Naive thymus-derived CD4-positive, alpha-beta T cell (primary cell): ENCODE measurements at regions of chr2 and their contacts with region 1.

Region 1: DNA sequence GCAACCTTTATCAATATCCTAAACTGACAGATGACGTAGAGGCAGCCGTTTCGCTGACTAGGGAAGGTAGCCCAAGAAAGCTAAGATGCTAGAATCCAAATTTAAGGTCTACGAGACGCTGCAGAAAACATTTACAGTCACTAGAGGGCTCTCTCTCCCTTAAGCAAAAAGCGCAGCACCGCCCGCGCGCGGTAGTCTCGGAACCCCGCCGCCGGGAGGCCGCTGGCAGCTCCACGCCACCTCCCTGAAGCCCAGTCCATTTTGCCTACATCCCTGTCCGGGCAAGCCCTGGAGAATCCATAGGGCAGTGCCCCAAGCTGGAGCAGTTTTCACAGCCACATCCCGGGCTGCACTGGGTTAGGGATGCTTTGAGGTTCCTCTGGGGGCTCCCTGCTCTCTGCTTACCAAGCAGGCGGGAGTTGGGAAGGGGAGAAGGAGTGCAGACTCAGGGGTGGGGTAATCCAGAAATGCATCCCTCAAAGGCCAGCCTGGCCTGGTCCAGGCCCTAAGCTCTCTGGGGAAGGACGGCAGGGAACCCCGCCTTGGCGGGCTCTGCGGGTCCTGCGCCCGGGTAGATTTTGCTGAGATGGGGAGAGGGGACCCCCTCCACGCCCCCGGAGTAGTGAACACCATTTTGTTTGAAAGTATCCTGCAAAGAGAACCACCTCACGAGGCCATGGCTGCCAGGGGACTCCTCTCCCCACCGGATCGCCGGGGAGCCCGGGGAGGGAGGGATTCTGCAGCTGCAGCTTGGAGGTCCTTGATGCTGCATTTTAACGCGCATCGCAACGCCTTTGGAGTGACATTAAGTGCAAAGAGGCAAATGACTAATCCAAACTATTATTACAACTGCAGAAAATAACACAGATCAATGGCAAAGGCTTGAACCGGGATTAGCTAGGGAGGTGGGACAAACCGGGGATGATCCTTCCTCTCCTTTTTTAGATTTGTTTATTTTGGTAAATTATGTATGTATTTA is 1.3 kb upstream of the DPYSL5 start:
- DNase-seq: peak; percentile 38 to 67 (median 59)
- ATAC-seq: peak; percentile 84
- H3K4me3 ChIP-seq: no peak overlapping the region
- H3K4me3 Mint-ChIP-seq: peak overlapping the region; percentile 61 to 88 (median 78)
- H3K27ac ChIP-seq: no peak overlapping the region
- H3K27ac Mint-ChIP-seq: no peak overlapping the region
- H3K4me1 ChIP-seq: peaks cover 8 to 20% of the 10 kb centered on the region in 2 donors
- H3K4me1 Mint-ChIP-seq: peaks cover 3 to 20% (median 13%) of the 10 kb centered on the region in 7 donors
- H3K27me3 ChIP-seq: peaks cover 6 to 17% of the 10 kb centered on the region in 2 donors
- H3K27me3 Mint-ChIP-seq: peaks cover 44 to 58% (median 46%) of the 10 kb centered on the region in 5 donors

Region 2: DNA sequence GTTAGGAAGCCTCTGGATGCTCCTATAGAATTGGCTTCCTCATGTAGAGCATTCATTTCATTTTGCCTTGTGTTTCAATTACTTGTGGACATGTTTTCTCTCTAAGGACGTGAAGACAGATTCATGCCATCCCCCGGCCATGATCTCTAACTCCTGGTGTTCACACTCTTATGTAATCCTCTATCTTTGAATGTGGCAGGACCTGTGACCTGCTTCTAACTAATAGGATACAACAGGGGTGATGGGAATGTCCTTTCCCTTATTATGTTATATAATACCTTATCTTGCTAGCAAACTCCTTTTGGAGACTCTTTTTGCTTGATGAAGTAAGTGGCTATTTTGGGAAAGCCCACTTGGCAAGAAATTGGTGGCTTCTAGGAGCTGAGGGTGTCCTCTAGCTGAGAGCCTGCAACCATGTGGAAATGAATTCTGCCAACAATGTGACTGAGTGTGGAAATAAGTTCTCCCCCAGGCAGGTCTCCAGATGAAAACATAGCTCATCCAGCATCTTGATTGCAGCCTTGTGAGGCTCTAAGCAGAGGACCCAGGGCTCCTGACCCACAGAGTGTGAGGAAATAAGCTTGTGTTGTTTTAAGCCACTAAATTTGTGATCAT is 15.1 kb after region 1 on chr2:
- CTCF ChIA-PET with region 1: interaction called, 9 read pairs
- POLR2A ChIA-PET with region 1: interaction called, 10 read pairs
- intact Hi-C with region 1: no loop called
- DNase-seq: no peak
- ATAC-seq: no peak
- H3K4me3 ChIP-seq: no peak overlapping the region
- H3K4me3 Mint-ChIP-seq: no peak overlapping the region
- H3K27ac ChIP-seq: no peak overlapping the region
- H3K27ac Mint-ChIP-seq: no peak overlapping the region
- H3K4me1 ChIP-seq: no peaks in the 10 kb centered on the region
- H3K4me1 Mint-ChIP-seq: no peaks in the 10 kb centered on the region
- H3K27me3 ChIP-seq: no peaks in the 10 kb centered on the region
- H3K27me3 Mint-ChIP-seq: peaks cover 10 to 44% (median 19%) of the 10 kb centered on the region in 5 donors

Region 3: GRCh38 chr2:26922405-26923188 is 76.0 kb after region 1 on chr2:
- CTCF ChIA-PET with region 1: interaction called, 6 read pairs
- POLR2A ChIA-PET with region 1: no interaction called
- intact Hi-C with region 1: loop called (anchors 1 to 5 kb)
- DNase-seq: peak in 7 of 9 donors; percentile 4 to 48 (median 39)
- ATAC-seq: peak; percentile 85
- H3K4me3 ChIP-seq: no peak overlapping the region
- H3K4me3 Mint-ChIP-seq: peak overlapping the region in 1 of 10 donors; percentile 24
- H3K27ac ChIP-seq: no peak overlapping the region
- H3K27ac Mint-ChIP-seq: peak overlapping the region in 1 of 9 donors; percentile 15
- H3K4me1 ChIP-seq: no peaks in the 10 kb centered on the region
- H3K4me1 Mint-ChIP-seq: peaks cover 0 to 9% (median 3%) of the 10 kb centered on the region in 7 donors
- H3K27me3 ChIP-seq: no peaks in the 10 kb centered on the region
- H3K27me3 Mint-ChIP-seq: peaks cover 0 to 27% (median 20%) of the 10 kb centered on the region in 5 donors

Region 4: GRCh38 chr2:26942543-26943295 is 96.1 kb after region 1 on chr2:
- CTCF ChIA-PET with region 1: interaction called, 16 read pairs
- POLR2A ChIA-PET with region 1: no interaction called
- intact Hi-C with region 1: loop called (anchors 1 kb)
- DNase-seq: peak; percentile 38 to 68 (median 61)
- ATAC-seq: peak; percentile 74
- H3K4me3 ChIP-seq: no peak overlapping the region
- H3K4me3 Mint-ChIP-seq: no peak overlapping the region
- H3K27ac ChIP-seq: no peak overlapping the region
- H3K27ac Mint-ChIP-seq: no peak overlapping the region
- H3K4me1 ChIP-seq: no peaks in the 10 kb centered on the region
- H3K4me1 Mint-ChIP-seq: peaks cover 0 to 7% (median 4%) of the 10 kb centered on the region in 7 donors
- H3K27me3 ChIP-seq: no peaks in the 10 kb centered on the region
- H3K27me3 Mint-ChIP-seq: peaks cover 3 to 19% (median 8%) of the 10 kb centered on the region in 5 donors

Region 5: GRCh38 chr2:27016801-27017325 is 170.2 kb after region 1 on chr2:
- CTCF ChIA-PET with region 1: interaction called, 3 read pairs
- POLR2A ChIA-PET with region 1: no interaction called
- intact Hi-C with region 1: loop called (anchors 2 kb)
- DNase-seq: peak in 7 of 9 donors; percentile 20 to 38 (median 27)
- ATAC-seq: peak; percentile 54
- H3K4me3 ChIP-seq: no peak overlapping the region
- H3K4me3 Mint-ChIP-seq: no peak overlapping the region
- H3K27ac ChIP-seq: no peak overlapping the region
- H3K27ac Mint-ChIP-seq: no peak overlapping the region
- H3K4me1 ChIP-seq: no peaks in the 10 kb centered on the region
- H3K4me1 Mint-ChIP-seq: peaks cover 0 to 7% (median 0%) of the 10 kb centered on the region in 7 donors
- H3K27me3 ChIP-seq: no peaks in the 10 kb centered on the region
- H3K27me3 Mint-ChIP-seq: no peaks in the 10 kb centered on the region

Region 6: DNA sequence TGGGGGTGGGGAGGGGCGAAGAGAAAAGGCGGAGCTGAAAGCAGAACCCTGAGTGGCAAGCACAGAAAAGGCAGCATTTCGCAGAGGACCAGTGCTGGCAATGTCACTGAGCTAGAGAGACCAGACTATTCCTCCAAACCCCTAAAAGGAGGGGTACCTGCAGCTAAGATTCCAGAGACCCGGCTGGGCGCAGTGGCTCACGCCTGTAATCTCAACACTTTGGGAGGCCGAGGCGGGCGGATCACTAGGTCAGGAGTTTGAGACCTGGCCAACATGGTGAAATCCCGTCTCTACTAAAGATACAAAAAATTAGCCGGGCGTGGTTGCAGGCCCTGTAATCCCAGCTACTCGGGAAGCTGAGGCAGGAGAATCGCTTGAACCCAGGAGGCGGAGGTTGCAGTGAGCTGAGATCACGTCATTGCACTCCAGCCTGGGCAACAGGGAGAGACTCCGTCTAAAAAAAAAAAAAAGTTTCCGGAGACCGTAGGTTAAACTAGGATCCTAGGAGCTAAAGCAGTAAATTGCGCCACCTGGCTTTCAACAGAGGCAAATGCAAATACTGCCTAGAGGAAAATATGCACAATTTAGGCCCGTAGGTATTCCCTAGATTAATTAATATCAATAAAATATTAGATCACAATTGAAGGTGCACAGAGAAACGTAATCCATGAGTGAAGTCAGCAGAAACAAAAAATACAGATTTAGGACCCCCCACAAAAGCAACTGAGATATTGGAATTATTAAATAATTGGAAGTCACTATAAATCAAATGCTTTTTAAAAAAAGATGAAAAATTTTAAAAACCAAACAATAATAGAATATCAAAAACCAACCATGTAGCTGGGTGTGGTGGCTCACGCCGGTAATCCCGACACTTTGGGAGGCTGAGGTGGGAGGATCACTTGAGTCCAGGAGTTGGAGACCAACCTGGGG is 456.7 kb after region 1 on chr2:
- CTCF ChIA-PET with region 1: no interaction called
- POLR2A ChIA-PET with region 1: no interaction called
- intact Hi-C with region 1: loop called in 1 of 2 experiments (anchors 10 kb)
- DNase-seq: peak in 8 of 9 donors; percentile 32 to 62 (median 54)
- ATAC-seq: peak; percentile 76
- H3K4me3 ChIP-seq: peak overlapping the region; percentile 43
- H3K4me3 Mint-ChIP-seq: peak overlapping the region; percentile 67 to 85 (median 80)
- H3K27ac ChIP-seq: peak overlapping the region; percentile 42
- H3K27ac Mint-ChIP-seq: peak overlapping the region in 7 of 9 donors; percentile 18 to 83 (median 54)
- H3K4me1 ChIP-seq: peaks cover 0 to 6% of the 10 kb centered on the region in 2 donors
- H3K4me1 Mint-ChIP-seq: peaks cover 0 to 11% (median 9%) of the 10 kb centered on the region in 7 donors
- H3K27me3 ChIP-seq: peaks cover 0 to 6% of the 10 kb centered on the region in 2 donors
- H3K27me3 Mint-ChIP-seq: peaks cover 13 to 34% (median 19%) of the 10 kb centered on the region in 5 donors

Region 7: GRCh38 chr2:27798948-27799645 is 952.5 kb after region 1 on chr2:
- CTCF ChIA-PET with region 1: no interaction called
- POLR2A ChIA-PET with region 1: no interaction called
- intact Hi-C with region 1: no loop called
- DNase-seq: no peak
- ATAC-seq: no peak
- H3K4me3 ChIP-seq: no peak overlapping the region
- H3K4me3 Mint-ChIP-seq: no peak overlapping the region
- H3K27ac ChIP-seq: no peak overlapping the region
- H3K27ac Mint-ChIP-seq: peak overlapping the region in 1 of 9 donors; percentile 82
- H3K4me1 ChIP-seq: no peaks in the 10 kb centered on the region
- H3K4me1 Mint-ChIP-seq: peaks cover 0 to 6% (median 0%) of the 10 kb centered on the region in 7 donors
- H3K27me3 ChIP-seq: no peaks in the 10 kb centered on the region
- H3K27me3 Mint-ChIP-seq: no peaks in the 10 kb centered on the region